CD4-positive, alpha-beta T cell (primary cell): ENCODE measurements at regions of chr1 and their contacts with region 1.

Region 1: DNA sequence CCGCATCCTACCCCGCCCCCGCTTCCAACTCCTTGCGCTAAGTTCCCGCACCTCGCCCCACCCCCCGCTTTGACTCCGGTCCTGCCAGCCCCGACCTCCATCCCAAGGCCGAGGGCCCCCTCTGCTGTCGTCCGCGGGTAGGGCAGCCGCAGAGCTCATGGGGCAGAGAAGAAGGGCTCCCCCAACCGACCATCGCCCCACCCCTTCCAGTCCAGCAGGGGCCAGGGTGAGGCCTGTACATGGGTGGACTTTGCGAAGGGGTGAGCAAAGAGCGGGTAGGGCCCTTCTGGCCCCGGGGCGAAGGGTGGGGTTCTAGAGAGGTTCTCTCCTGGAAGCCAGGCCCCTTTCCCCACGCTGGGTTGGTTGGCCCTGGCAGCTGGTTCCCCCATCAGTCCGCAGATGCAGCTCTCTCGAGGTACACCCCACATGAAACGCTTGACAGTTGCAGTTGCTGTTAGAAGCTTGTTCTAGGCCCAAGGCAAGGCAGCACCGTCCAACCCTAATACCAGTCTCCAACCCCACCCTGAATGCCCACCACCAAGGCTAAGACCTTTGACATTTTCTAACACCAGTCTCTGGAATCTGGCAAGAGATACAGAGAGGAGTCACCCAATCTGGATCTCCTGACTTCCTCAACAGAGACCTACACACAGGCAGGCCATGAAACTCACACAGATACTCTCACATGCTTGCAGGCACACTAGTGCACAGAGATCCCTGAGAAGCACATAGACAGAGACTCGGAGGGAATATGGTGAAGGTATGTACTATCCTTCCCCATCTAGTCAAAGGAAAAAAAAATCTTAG is 25.3 kb upstream of the ADGRB2 start:
- DNase-seq: peak; percentile 90 to 98 (median 94)
- ATAC-seq: peak; percentile 82
- H3K4me3 ChIP-seq: peak overlapping the region; percentile 90
- H3K4me3 Mint-ChIP-seq: peak overlapping the region; percentile 98
- H3K27ac ChIP-seq: no peak overlapping the region
- H3K27ac Mint-ChIP-seq: peak overlapping the region; percentile 90
- H3K4me1 ChIP-seq: peaks cover 19% of the 10 kb centered on the region
- H3K4me1 Mint-ChIP-seq: peaks cover 15% of the 10 kb centered on the region
- H3K27me3 ChIP-seq: no peaks in the 10 kb centered on the region
- H3K27me3 Mint-ChIP-seq: no peaks in the 10 kb centered on the region
- CTCF ChIP-seq: peak; percentile 73

Region 2: DNA sequence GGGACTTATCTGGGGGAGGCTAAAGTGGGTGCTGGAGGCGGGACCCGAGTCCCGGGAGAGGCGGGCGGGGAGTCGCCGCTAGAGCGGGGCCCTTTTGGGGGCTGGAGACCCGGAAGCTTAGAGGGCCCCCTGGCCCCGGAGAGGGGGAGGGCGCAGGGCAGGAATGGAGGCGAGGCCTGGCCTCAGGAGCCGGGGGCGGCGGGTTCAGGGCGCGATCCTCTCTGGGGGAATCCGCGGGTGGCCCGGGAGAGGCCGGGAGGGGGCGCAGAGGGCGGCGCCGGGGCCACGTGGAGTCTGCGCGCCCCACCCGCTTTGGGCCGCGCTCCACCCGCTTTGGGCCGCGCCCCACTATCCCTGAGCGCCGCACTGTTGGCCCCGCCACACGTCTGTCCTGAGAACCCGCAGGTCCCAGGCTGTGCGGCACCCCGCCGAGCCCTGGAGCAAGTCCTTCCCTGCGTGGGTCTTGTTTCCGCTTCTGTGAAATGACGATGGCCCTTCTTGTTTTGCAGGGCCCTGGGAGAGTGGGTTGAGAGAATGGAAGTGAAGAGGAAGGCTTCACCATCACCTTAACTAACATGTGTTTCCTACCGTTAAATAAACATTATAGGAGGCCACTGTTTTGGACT is 634.1 kb before region 1 on chr1:
- CTCF ChIA-PET with region 1: no interaction called
- POLR2A ChIA-PET with region 1: no interaction called
- intact Hi-C with region 1: loop called in 1 of 2 experiments (anchors 5 kb)
- DNase-seq: peak; percentile 14 to 78 (median 32)
- ATAC-seq: peak; percentile 81
- H3K4me3 ChIP-seq: peak overlapping the region; percentile 66
- H3K4me3 Mint-ChIP-seq: peak overlapping the region; percentile 89
- H3K27ac ChIP-seq: no peak overlapping the region
- H3K27ac Mint-ChIP-seq: peak overlapping the region; percentile 40
- H3K4me1 ChIP-seq: peaks cover 14% of the 10 kb centered on the region
- H3K4me1 Mint-ChIP-seq: peaks cover 12% of the 10 kb centered on the region
- H3K27me3 ChIP-seq: no peaks in the 10 kb centered on the region
- H3K27me3 Mint-ChIP-seq: no peaks in the 10 kb centered on the region
- CTCF ChIP-seq: peak; percentile 35

Region 3: DNA sequence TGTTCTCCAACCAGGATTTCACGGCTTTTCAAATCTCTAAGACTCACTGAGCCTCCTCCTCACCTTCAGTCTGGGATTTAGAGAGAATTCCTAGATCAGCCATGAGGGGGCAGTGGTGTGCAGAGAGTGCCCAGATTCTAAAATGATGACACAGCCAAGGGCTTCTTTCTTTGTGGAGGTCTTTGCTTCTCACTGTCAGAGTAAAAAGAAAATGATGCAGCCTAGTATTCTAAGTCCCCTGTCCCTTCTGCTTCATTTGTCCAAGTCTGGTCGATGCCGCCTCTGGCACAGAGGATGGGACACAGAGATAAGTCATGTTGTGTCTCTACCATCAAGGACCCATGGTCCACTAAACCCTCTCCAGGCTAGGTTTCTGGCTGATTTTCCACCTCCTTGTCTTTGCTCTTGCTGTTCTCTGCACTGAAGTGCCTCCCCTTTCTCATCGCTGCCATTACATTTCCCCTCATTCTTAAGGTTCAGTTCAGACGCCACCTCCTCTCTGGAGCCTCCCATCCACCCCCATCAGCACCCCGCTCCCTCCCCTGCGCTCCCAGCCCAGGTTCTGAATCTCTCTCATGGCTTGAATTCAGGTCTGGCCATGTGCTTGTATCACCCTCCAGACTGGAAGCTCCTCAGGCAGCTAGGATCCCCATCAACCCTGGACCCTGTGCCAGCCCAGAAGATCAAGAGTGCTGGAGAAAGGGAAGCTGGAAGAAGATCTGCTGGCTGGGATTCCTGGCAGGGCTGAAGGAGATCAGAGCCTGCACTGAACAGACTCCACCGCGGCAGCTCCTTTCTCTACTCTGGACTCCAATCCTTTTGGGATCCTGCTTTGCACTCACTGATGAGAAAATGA is 225.1 kb before region 1 on chr1:
- CTCF ChIA-PET with region 1: interaction called, 9 read pairs
- POLR2A ChIA-PET with region 1: no interaction called
- intact Hi-C with region 1: loop called (anchors 1 kb)
- DNase-seq: peak in 12 of 14 experiments; percentile 17 to 68 (median 40)
- ATAC-seq: peak; percentile 63
- H3K4me3 ChIP-seq: no peak overlapping the region
- H3K4me3 Mint-ChIP-seq: no peak overlapping the region
- H3K27ac ChIP-seq: no peak overlapping the region
- H3K27ac Mint-ChIP-seq: no peak overlapping the region
- H3K4me1 ChIP-seq: no peaks in the 10 kb centered on the region
- H3K4me1 Mint-ChIP-seq: no peaks in the 10 kb centered on the region
- H3K27me3 ChIP-seq: peaks cover 12 to 20% of the 10 kb centered on the region in 2 experiments
- H3K27me3 Mint-ChIP-seq: peaks cover 13% of the 10 kb centered on the region
- CTCF ChIP-seq: peak; percentile 67

Region 4: GRCh38 chr1:31663622-31664452 is 125.6 kb before region 1 on chr1:
- CTCF ChIA-PET with region 1: interaction called, 16 read pairs
- POLR2A ChIA-PET with region 1: interaction called, 4 read pairs
- intact Hi-C with region 1: loop called (anchors 1 kb)
- DNase-seq: peak in 13 of 14 experiments; percentile 23 to 72 (median 54)
- ATAC-seq: peak; percentile 54
- H3K4me3 ChIP-seq: no peak overlapping the region
- H3K4me3 Mint-ChIP-seq: no peak overlapping the region
- H3K27ac ChIP-seq: no peak overlapping the region
- H3K27ac Mint-ChIP-seq: no peak overlapping the region
- H3K4me1 ChIP-seq: no peaks in the 10 kb centered on the region
- H3K4me1 Mint-ChIP-seq: no peaks in the 10 kb centered on the region
- H3K27me3 ChIP-seq: no peaks in the 10 kb centered on the region
- H3K27me3 Mint-ChIP-seq: no peaks in the 10 kb centered on the region
- CTCF ChIP-seq: peak; percentile 80

Region 5: DNA sequence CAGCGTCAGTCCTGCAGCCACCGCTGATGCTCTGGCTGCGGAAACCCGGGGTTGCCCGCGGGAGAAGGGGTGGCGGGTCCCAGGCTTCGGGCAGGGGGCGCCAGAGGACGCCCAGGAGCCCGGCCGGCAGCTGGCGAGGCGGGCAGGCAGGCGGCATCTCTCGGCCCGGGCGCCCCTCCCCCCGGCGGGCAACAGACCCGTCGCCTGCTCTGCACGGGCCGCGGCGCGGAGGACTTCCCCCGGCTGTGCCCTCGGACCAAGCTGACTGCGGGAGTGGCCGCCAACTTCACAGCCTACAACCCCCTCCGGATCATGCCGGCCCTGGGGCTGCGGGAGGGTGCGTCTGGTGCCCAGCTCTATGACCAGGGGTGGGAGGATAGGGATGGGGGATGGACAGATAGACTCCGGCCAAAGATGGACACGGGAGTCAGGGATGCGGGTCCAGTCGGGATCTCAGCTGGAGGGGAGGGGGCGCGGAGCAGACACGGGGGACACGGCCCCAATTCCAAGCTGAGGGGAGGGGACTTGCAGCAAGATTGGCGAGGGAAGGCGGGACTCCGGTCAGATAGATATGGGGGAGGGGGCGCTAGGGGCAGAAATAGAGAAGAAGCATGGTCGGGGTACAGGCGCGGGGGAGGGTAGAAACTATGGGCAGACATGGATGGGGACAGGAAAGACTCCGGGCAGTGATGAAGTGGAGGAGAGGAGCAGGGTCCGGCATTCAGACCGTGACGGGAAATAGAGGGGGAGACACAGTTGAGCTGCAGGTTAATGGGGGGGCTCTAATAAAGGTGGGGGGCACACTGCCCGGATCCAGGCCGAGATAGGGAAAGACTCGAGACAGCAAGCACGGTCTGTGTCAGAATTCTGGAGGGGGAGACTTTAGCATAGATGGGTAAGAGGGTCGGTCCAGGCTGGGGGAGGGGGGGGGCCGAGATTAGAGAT is 26.5 kb before region 1 on chr1:
- CTCF ChIA-PET with region 1: interaction called, 35 read pairs
- POLR2A ChIA-PET with region 1: interaction called, 13 read pairs
- intact Hi-C with region 1: loop called (anchors 1 kb)
- DNase-seq: peak; percentile 48 to 88 (median 62)
- ATAC-seq: peak; percentile 51
- H3K4me3 ChIP-seq: peak overlapping the region; percentile 42
- H3K4me3 Mint-ChIP-seq: peak overlapping the region; percentile 86
- H3K27ac ChIP-seq: no peak overlapping the region
- H3K27ac Mint-ChIP-seq: no peak overlapping the region
- H3K4me1 ChIP-seq: peaks cover 46% of the 10 kb centered on the region
- H3K4me1 Mint-ChIP-seq: peaks cover 26% of the 10 kb centered on the region
- H3K27me3 ChIP-seq: peaks cover 11% of the 10 kb centered on the region in 2 experiments
- H3K27me3 Mint-ChIP-seq: peaks cover 15% of the 10 kb centered on the region
- CTCF ChIP-seq: peak; percentile 61

Region 6: GRCh38 chr1:32321712-32322291 is 532.3 kb after region 1 on chr1:
- CTCF ChIA-PET with region 1: no interaction called
- POLR2A ChIA-PET with region 1: no interaction called
- intact Hi-C with region 1: no loop called
- DNase-seq: peak in 10 of 14 experiments; percentile 7 to 70 (median 29)
- ATAC-seq: peak; percentile 87
- H3K4me3 ChIP-seq: peak overlapping the region; percentile 25
- H3K4me3 Mint-ChIP-seq: peak overlapping the region; percentile 62
- H3K27ac ChIP-seq: peak overlapping the region; percentile 12 to 49
- H3K27ac Mint-ChIP-seq: peak overlapping the region; percentile 82
- H3K4me1 ChIP-seq: peaks cover 62% of the 10 kb centered on the region
- H3K4me1 Mint-ChIP-seq: peaks cover 51% of the 10 kb centered on the region
- H3K27me3 ChIP-seq: no peaks in the 10 kb centered on the region
- H3K27me3 Mint-ChIP-seq: no peaks in the 10 kb centered on the region
- CTCF ChIP-seq: no peak